ENCODE measurements at regions of chr4 and their contacts with region 1.

Region 1: DNA sequence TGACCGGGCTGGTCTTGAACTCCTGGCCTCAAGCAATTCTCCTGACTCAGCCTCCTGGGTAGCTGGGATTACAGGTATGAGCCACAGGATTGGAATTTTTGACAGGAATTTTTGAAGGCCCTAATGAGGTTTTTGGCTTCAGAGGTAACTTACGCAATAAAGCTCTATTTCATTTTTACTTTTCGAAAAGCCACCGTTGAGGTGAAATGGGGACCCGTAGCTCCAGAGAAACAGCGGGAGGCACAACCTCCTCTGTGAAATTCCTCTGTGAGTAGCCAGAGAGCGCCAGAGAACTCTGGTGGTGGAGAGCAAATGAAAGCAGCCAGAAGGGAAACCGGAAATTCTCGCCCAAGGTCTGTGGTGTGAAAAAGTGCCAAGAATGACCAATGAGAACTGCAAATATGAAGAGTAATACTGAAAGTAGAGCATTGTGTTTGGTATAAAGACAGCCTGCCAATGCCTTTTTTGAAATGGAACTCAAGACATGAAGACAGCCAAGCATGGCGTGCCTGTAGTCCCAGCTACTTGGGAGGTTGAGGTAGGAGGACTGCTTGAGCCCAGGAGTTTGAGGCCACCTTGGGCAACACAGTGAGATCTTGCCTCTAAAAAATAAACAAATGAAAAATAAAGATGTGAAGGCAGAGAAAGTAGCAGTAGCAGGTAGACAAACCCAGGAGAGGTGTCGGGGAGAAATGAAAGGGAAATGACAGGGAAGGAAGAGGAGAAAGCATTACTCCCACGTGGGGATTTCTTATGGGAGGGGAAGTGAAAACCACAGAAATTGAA is 33.0 kb upstream of the TMEM131L start:
- DNase-seq: peak; percentile 83
- H3K4me3 ChIP-seq: peak overlapping the region in 7 of 8 donors; percentile 18 to 68 (median 33)
- H3K27ac ChIP-seq: peak overlapping the region; percentile 57 to 90 (median 83)
- H3K4me1 ChIP-seq: peaks cover 20 to 94% (median 48%) of the 10 kb centered on the region in 6 donors
- H3K27me3 ChIP-seq: no peaks in the 10 kb centered on the region
- CTCF ChIP-seq: peak; percentile 70 to 97 (median 86)
- POLR2A ChIP-seq: no peak

Region 2: DNA sequence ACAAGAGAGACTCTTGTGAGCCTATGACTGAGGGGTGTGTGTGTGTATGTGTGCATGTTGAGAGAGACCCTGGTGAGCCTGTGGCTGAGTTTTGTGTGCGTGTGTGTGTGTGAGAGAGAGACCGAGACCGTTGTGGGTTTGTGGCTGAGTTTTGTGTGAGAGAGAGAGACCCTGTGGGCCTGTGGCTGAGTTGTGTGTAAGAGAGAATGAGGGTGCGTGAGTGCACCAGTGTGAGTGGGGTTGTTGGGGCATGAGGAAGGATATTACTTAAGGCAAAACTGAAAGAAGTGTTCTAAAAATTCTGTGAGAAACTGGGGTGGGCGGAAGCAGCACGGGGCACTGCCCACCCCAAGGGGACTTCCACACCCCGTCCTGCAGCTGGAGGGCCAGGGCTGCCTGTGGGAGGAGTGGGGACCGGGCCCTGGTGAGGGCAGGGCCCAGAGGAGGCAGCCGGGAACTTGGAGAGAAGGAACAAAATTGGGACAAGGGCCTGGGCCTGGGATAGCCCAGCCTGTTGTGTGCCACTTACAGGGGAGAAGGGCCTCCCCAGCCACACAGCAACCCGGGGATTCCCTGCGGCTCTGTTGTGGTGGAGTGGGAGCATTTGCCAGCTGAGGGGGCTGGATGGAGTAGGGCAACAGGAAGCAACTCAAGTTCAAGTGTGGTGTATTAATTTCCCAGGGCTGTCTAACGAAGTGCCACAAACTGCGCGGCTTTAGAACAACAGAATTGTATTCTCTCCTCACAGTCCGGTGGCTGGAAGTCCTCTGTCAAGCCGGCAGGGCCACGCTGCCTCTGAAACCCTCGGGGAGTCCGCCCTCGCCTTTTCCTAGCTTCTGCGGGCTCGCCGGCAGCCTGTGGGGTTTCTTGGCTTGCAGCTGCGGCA is 55.1 kb after region 1 on chr4:
- intact Hi-C with region 1: loop called (anchors 10 kb)
- DNase-seq: peak; percentile 89
- H3K4me3 ChIP-seq: peak overlapping the region; percentile 7 to 62 (median 30)
- H3K27ac ChIP-seq: peak overlapping the region; percentile 76 to 91 (median 88)
- H3K4me1 ChIP-seq: peaks cover 70 to 99% (median 95%) of the 10 kb centered on the region in 6 donors
- H3K27me3 ChIP-seq: no peaks in the 10 kb centered on the region
- CTCF ChIP-seq: no peak
- POLR2A ChIP-seq: no peak

Region 3: DNA sequence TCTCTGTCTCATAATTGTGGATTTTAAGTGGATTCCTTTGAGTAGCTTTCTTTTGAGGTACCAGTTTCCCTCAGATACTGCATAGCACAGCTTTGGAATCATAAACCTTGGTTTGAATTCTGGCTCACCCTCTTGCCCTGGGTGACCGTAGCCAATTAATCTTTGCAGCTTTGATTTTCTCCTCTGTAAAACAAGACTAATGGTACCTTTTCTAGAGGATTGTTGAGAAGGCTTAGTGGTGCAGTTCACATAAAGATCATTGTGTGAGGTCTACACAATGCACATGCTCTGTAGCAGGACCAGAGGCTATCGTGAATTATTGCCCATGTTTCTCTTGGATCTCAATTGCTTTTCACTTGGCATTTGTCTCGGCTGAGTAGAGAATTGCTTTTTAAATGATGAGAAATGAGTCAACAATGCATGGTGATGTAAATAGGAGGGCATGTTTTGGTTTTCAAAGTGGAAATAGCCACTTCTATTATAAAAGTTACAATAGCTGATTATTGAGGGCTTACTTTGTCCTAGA is 80.9 kb after region 1 on chr4:
- intact Hi-C with region 1: loop called (anchors 10 kb)
- DNase-seq: no peak
- H3K4me3 ChIP-seq: no peak overlapping the region
- H3K27ac ChIP-seq: peak overlapping the region in 5 of 8 donors; percentile 30 to 62 (median 53)
- H3K4me1 ChIP-seq: peaks cover 22 to 89% (median 63%) of the 10 kb centered on the region in 6 donors
- H3K27me3 ChIP-seq: no peaks in the 10 kb centered on the region
- CTCF ChIP-seq: no peak
- POLR2A ChIP-seq: no peak

Region 4: GRCh38 chr4:153573881-153574802 is 141.0 kb after region 1 on chr4:
- intact Hi-C with region 1: loop called (anchors 10 kb)
- DNase-seq: peak; percentile 83
- H3K4me3 ChIP-seq: no peak overlapping the region
- H3K27ac ChIP-seq: peak overlapping the region; percentile 17 to 54 (median 38)
- H3K4me1 ChIP-seq: peaks cover 37 to 99% (median 65%) of the 10 kb centered on the region in 6 donors
- H3K27me3 ChIP-seq: no peaks in the 10 kb centered on the region
- CTCF ChIP-seq: peak; percentile 41 to 72 (median 60)
- POLR2A ChIP-seq: no peak

Measured in spleen (tissue), 13 donors.